HCT116 (cell line): ENCODE measurements at regions of chr13 and their contacts with region 1.

Region 1: DNA sequence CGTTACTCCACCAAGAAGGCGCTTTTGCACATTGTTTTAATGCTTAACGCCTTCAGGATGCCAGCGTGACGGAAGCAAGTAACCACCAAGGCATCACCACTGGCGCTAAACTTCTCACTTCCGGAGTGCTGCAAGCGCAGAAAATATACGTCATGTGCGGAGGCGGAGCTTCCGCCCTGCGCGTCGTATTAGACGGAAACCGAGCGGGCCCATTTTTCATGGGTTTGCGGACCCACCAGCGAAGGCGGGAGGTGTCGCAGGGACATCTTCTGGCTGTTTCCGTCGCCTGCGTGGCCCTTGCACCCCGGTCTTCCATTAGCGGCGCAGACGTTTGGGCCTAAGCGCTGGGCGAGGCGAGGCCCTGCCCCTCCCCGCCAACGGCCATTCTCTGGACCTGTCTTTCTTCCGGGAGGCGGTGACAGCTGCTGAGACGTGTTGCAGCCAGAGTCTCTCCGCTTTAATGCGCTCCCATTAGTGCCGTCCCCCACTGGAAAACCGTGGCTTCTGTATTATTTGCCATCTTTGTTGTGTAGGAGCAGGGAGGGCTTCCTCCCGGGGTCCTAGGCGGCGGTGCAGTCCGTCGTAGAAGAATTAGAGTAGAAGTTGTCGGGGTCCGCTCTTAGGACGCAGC is at the start of gene ERCC5:
- DNase-seq: peak; percentile 95
- ATAC-seq: peak; percentile 89
- H3K4me3 ChIP-seq: peak within 1 kb of the TSS; percentile 97 to 98
- H3K27ac ChIP-seq: peak within 1 kb of the TSS; percentile 89
- H3K4me1 ChIP-seq: peaks cover 0 to 18% of the 10 kb centered on the region in 2 experiments; a peak in 3 of 4 replicates
- H3K27me3 ChIP-seq: no peaks in the 10 kb centered on the region
- CTCF ChIP-seq: no peak
- POLR2A ChIP-seq: peak; percentile 87
- RAD21 ChIP-seq: no peak
- total RNA-seq, gene ERCC5: 25.6 TPM

Region 2: DNA sequence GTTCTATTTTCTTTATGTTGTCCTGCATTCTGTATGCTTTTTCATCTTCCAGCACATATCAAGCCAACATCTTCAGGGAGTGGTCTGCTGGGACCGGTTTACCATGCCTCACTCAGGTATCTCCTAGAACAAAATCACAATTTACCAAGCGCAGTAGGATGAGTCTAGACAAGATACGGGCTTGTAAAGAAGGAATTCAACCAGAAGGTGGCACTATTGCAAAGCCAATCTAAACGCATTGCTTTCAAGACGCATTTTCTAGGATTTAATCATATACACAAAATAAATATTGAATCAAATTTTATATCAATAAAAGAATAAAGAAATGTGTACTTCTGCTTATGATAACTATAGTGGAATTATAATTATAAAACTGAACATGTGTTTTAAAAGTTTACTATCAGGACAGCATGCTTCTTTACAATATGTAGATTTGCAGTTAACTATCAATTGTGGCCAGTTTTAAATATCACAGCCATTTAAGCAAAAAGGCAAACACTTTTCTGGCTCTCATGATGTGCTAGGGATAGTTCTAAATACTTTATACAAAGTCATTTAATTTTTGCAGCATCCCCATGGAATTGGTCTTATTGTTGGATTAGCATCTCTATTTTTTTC is 265.1 kb before region 1 on chr13:
- CTCF ChIA-PET with region 1: interaction called, 5 read pairs
- POLR2A ChIA-PET with region 1: no interaction called
- RAD21 ChIA-PET with region 1: interaction called in 1 of 2 experiments, 4 read pairs
- intact Hi-C with region 1: loop called (anchors 1 kb)
- DNase-seq: peak; percentile 68
- ATAC-seq: peak; percentile 87
- H3K4me3 ChIP-seq: no peak overlapping the region
- H3K27ac ChIP-seq: no peak overlapping the region
- H3K4me1 ChIP-seq: no peaks in the 10 kb centered on the region
- H3K27me3 ChIP-seq: peaks cover 21% of the 10 kb centered on the region; the same call in 1 of the 2 replicates
- CTCF ChIP-seq: peak; percentile 67; a peak in 5 of 6 replicates
- POLR2A ChIP-seq: no peak
- RAD21 ChIP-seq: peak; percentile 80

Region 3: DNA sequence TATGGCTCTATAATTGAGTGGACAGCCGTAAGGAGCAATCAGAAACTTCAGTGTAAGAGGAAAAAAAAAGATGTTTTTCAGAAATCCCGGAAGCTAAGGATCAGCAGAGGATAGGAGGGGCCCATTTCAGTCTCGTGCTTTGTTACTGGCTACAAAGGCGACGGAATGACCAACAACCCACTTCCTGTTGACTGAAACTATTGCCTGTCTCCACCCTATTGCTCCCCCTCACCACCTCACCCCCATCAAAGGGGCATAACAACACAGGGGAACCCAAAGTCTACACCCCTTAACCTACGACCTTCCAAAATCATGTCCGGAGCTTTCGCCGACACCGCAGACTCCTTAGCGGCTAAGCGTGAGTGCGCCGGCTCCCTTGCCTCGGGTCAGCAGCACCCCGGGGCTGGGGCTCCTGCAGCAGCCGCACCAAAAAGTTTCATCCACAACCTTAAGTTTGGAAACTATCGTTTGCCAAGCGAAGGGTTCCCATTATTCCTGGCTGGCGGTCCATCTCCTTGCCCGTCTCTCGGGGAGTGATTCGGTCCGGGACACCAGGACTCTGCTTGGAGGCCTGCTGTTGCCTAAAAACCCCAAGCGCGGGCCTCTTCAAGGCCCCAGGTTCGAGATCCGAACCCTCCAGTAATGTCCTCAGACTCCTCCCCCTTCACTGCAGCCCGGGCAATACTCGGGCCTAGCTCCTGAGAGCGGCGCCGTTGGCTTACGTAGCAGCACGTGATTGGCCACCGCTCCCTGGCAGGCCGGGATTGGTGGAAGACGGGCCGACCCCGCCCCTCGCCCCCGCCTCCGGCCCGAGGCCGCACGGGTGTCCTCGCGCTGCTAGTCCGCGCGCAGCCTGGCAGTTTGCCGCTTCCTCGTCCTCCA is 249.4 kb before region 1 on chr13 and contains the start of gene TPP2:
- CTCF ChIA-PET with region 1: interaction called, 7 read pairs
- POLR2A ChIA-PET with region 1: interaction called, 11 read pairs
- RAD21 ChIA-PET with region 1: no interaction called
- intact Hi-C with region 1: loop called (anchors 1 kb)
- DNase-seq: peak; percentile 95
- ATAC-seq: peak; percentile 92
- H3K4me3 ChIP-seq: peak within 1 kb of the TSS; percentile 78 to 97
- H3K27ac ChIP-seq: peak within 1 kb of the TSS; percentile 89
- H3K4me1 ChIP-seq: peaks cover 0 to 28% of the 10 kb centered on the region in 2 experiments; a peak in 3 of 4 replicates
- H3K27me3 ChIP-seq: no peaks in the 10 kb centered on the region
- CTCF ChIP-seq: no peak
- POLR2A ChIP-seq: peak; percentile 78
- RAD21 ChIP-seq: no peak
- total RNA-seq, gene TPP2: 36.7 TPM

Region 4: DNA sequence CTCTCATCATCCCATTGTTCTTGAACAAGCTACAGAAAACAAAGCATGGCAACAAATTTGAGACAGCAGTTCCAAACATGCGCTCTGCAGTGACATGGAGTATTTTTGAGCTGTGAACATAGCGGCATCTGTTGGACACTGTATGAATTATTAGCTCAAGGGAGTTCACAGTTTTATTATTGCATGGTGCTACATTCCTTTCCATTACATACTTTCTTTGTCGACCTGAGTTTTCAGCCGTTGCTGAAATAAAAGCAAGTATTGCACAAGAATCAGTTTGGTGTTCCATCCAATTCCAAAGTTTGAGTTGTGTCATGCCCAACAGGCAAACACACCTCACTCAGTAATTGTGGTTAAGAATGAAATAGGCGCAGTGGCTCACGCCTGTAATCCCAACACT is 120.8 kb before region 1 on chr13:
- CTCF ChIA-PET with region 1: no interaction called
- POLR2A ChIA-PET with region 1: no interaction called
- RAD21 ChIA-PET with region 1: no interaction called
- intact Hi-C with region 1: loop called (anchors 2 kb)
- DNase-seq: no peak
- ATAC-seq: peak; percentile 87
- H3K4me3 ChIP-seq: no peak overlapping the region
- H3K27ac ChIP-seq: no peak overlapping the region
- H3K4me1 ChIP-seq: peaks cover 0 to 4% of the 10 kb centered on the region in 2 experiments; a peak in 2 of 4 replicates
- H3K27me3 ChIP-seq: peaks cover 37% of the 10 kb centered on the region
- CTCF ChIP-seq: peak; percentile 51 to 64 (median 51); a peak in 5 of 6 replicates
- POLR2A ChIP-seq: no peak
- RAD21 ChIP-seq: peak; percentile 68

Region 5: GRCh38 chr13:102773441-102774215 is 72.1 kb before region 1 on chr13 and contains the start of gene TEX30:
- CTCF ChIA-PET with region 1: interaction called, 4 read pairs
- POLR2A ChIA-PET with region 1: interaction called, 3 read pairs
- RAD21 ChIA-PET with region 1: no interaction called
- intact Hi-C with region 1: loop called (anchors 2 kb)
- DNase-seq: peak; percentile 40
- ATAC-seq: peak; percentile 96
- H3K4me3 ChIP-seq: peak within 1 kb of the TSS; percentile 57 to 85
- H3K27ac ChIP-seq: peak within 1 kb of the TSS; percentile 77
- H3K4me1 ChIP-seq: peaks cover 0 to 25% of the 10 kb centered on the region in 2 experiments; a peak in 2 of 4 replicates
- H3K27me3 ChIP-seq: no peaks in the 10 kb centered on the region
- CTCF ChIP-seq: no peak
- POLR2A ChIP-seq: peak; percentile 84
- RAD21 ChIP-seq: no peak
- total RNA-seq, gene TEX30: 22.3 TPM

Region 6: DNA sequence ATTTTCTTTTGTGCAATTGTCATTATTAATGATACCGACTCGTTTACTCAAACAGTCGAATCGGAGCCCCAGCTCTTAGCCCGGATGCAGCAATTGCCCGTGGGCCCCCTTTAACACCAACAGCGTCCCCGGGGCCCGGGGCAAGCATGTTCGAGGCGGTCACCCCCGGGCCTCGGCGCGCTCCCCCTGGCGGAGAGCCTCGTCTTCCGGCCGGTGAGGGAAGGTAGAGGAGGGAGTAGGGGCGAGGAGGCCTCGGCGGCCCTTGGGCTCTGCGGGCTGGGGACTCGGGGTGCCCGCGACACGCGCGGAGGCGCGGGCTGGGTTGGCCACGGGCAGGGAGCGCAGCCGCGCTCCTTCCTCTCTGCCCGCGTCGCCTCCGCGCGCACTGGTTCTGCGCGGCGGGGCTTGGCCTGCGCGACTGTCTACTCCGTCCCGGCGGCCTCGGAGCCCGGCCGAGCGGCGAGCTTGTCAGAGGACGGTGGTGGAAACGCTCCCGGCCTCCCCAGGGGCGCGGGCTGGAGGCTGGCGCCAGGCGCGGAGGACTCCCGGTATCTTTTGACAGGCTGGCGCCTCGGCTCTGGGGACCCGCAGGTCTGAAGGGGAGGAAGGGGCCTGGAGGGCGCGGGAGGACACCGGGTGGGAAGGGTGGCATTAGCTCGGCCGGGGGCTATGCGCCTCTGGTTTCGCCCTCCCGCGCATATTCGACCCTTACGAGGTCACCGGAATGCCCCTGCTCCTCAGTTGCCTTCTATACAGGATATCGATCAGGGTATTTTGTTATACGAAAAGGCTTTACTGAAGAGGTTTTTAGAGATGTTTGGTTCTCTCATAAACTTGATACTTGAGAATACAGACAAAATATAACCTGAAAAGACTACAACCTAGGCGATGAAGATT is 45.4 kb before region 1 on chr13:
- CTCF ChIA-PET with region 1: no interaction called
- POLR2A ChIA-PET with region 1: no interaction called
- RAD21 ChIA-PET with region 1: no interaction called
- intact Hi-C with region 1: loop called (anchors 2 kb)
- DNase-seq: peak; percentile 34
- ATAC-seq: peak; percentile 74
- H3K4me3 ChIP-seq: peak overlapping the region; percentile 82 to 99
- H3K27ac ChIP-seq: peak overlapping the region; percentile 71
- H3K4me1 ChIP-seq: peaks cover 6 to 11% of the 10 kb centered on the region in 2 experiments
- H3K27me3 ChIP-seq: no peaks in the 10 kb centered on the region
- CTCF ChIP-seq: peak; percentile 49 to 78 (median 77); a peak in 5 of 6 replicates
- POLR2A ChIP-seq: no peak
- RAD21 ChIP-seq: peak; percentile 22